T-cell (primary cell): ENCODE measurements at regions of chr15 and their contacts with region 1.

Region 1: DNA sequence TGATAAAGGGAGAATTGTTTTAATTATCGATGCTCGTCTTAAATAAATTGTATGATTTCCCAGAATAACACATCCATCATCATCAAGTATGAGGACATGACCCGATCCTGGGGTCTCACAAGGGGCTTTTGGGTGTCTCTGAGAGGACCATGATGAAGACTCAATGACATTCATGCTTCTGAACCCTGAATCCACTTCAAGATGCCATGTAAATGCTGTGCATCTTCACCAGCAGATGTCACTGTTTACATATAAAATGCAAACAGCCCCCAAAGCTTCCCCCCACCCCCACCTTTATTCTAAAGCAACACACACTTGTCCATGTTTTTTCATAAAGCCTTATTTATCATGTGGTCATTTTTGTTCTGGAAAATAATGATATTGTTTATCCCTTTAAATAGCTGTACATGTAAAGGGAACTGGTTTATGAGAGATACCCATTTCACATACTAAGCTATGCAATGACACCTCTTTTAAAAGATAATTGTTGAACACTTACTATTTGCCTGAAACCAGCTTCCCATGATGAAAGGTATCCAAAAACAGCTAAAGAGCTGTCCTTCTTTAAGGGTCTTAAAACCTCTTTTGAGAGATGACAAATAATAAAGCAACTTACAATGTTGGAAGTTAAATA is 69.7 kb upstream of the UBE3A start:
- DNase-seq: peak in 1 of 35 experiments; percentile 46
- ATAC-seq: no peak
- H3K4me3 ChIP-seq: no peak overlapping the region
- H3K4me3 Mint-ChIP-seq: no peak overlapping the region
- H3K27ac ChIP-seq: no peak overlapping the region
- H3K27ac Mint-ChIP-seq: no peak overlapping the region
- H3K4me1 ChIP-seq: no peaks in the 10 kb centered on the region
- H3K4me1 Mint-ChIP-seq: no peaks in the 10 kb centered on the region
- H3K27me3 ChIP-seq: peaks cover 0 to 7% of the 10 kb centered on the region in 2 experiments
- H3K27me3 Mint-ChIP-seq: peaks cover 3 to 4% of the 10 kb centered on the region in 2 donors

Region 2: DNA sequence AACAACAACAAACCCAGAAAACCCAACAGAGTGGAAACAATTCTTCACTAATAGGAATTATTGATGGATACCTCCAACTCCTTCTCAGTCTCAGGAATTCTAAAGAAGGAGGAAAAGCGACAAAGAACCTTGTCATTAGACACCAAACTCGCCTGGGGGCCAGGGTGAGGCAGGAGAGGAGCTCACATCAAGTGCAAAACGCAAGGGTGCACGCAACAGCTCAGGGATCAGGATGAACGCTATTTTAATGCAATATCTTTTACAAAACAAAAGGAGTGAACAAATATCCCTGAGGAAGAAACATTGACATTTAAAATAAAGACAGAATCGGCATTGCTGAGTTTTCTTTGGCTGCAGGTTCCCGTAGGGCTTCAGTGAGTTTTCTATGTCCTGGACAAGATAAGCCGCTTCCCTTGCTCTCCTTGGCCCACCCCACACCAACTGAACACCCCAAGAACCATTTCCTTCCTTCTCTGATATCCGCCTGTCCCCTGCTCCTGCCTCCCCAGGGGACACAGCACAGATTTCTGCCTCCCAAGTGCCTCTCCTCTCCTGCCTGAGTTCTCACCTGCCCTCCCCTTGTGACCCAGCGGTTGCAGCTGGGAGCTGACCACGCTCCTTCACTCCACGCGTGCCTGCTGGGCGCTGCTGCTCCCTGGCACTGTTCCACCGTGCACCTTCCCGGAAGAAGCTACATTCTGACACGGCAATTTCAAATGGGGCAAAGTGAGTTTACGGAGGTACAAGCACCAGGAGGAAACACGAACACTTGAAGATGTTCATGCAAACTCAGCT is 291.6 kb after region 1 on chr15:
- CTCF ChIA-PET with region 1: interaction called in 1 of 2 experiments, 12 read pairs
- POLR2A ChIA-PET with region 1: no interaction called
- DNase-seq: peak in 2 of 35 experiments; percentile 14 to 20
- ATAC-seq: peak in 2 of 4 experiments; percentile 59 to 61
- H3K4me3 ChIP-seq: no peak overlapping the region
- H3K4me3 Mint-ChIP-seq: peak overlapping the region; percentile 21 to 75 (median 51)
- H3K27ac ChIP-seq: no peak overlapping the region
- H3K27ac Mint-ChIP-seq: peak overlapping the region in 1 of 2 donors; percentile 85
- H3K4me1 ChIP-seq: peaks cover 7 to 30% of the 10 kb centered on the region in 2 experiments
- H3K4me1 Mint-ChIP-seq: peaks cover 57 to 65% (median 60%) of the 10 kb centered on the region in 3 donors
- H3K27me3 ChIP-seq: no peaks in the 10 kb centered on the region
- H3K27me3 Mint-ChIP-seq: no peaks in the 10 kb centered on the region

Region 3: GRCh38 chr15:25883463-25884259 is 375.2 kb after region 1 on chr15:
- CTCF ChIA-PET with region 1: no interaction called
- POLR2A ChIA-PET with region 1: no interaction called
- DNase-seq: no peak
- ATAC-seq: no peak
- H3K4me3 ChIP-seq: no peak overlapping the region
- H3K4me3 Mint-ChIP-seq: no peak overlapping the region
- H3K27ac ChIP-seq: no peak overlapping the region
- H3K27ac Mint-ChIP-seq: no peak overlapping the region
- H3K4me1 ChIP-seq: no peaks in the 10 kb centered on the region
- H3K4me1 Mint-ChIP-seq: peaks cover 0 to 4% (median 0%) of the 10 kb centered on the region in 3 donors
- H3K27me3 ChIP-seq: peaks cover 0 to under 1% of the 10 kb centered on the region in 2 experiments
- H3K27me3 Mint-ChIP-seq: peaks cover 0 to 3% of the 10 kb centered on the region in 2 donors